ENCODE measurements at regions of chr22 and their contacts with region 1.

Region 1: GRCh38 chr22:40024201-40025061 is 29.7 kb downstream of the FAM83F start:
- DNase-seq: no peak
- H3K4me3 ChIP-seq: no peak overlapping the region
- H3K27me3 ChIP-seq: no peaks in the 10 kb centered on the region
- CTCF ChIP-seq: peak; percentile 96

Region 2: DNA sequence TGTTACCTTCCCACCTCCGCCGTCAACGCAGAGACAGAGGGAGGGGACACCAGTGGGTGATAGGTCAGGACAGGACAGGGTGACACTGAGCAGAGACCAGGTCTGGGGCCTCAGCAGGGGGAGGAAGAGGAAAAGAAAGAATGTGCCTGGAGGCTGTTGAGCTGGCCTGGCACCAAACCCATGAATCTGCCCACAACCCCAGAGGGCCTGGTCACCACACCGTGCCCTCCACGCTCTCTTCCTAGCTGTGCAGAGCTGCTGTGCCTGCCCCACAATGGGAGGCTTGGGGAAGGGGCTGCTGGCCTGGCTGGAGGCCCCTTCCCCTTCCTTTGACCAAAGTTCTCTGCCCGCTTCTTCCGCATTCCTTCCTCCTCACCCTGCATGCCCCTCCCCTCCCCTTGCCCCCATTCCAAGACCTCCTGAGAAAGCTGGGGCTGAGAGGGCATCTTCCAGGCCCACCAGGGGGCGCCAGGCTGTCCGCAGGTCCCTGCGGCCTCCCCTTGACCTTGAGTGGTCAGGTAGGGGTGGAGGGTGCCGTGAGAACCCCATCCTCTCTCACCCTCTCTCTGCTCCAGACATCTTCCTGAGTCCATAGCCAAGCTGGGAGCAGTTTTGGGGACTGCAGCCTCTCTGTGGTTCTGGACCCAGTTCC is 464.9 kb before region 1 on chr22:
- CTCF ChIA-PET with region 1: interaction called, 14 read pairs
- POLR2A ChIA-PET with region 1: no interaction called
- DNase-seq: no peak
- H3K4me3 ChIP-seq: no peak overlapping the region
- H3K27me3 ChIP-seq: peaks cover 40% of the 10 kb centered on the region
- CTCF ChIP-seq: peak; percentile 61

Region 3: DNA sequence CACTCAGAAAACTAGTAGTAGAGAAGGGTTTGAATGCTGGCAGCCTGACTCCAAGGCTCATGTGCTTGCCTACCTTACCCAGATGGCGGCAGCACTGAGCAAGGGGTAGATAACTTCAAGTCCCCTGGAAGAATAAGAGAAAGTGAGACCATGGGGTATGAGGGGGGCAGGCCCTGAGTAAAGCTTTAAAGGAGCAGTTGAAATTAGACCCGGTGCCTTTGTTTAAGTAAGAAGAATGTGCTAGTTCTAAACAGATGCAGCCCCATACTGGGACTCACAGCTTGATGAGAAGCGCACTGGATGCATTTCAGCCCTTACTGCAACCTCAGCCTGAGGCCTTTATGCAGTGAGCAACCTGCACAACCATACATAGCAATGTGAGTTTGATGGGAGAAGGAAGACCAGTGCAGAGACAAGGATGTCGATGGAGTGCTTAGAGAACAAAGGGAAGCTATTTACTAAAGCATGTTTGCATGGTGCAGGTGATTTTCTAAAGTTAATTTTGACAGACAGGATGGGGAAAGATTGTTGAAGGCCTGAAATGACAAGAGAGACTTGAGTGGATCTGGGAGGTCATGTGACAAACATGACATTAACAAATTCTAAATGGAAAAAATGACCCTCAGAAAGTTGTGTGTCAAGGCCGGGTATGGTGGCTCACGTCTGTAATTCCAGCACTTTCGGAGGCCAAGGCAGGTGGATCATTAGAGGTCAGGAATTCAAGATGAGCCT is 91.3 kb before region 1 on chr22:
- CTCF ChIA-PET with region 1: interaction called, 24 read pairs
- POLR2A ChIA-PET with region 1: no interaction called
- DNase-seq: no peak
- H3K4me3 ChIP-seq: no peak overlapping the region
- H3K27me3 ChIP-seq: peaks cover 24% of the 10 kb centered on the region
- CTCF ChIP-seq: peak; percentile 60

Region 4: GRCh38 chr22:40006641-40007040 is 17.8 kb before region 1 on chr22:
- CTCF ChIA-PET with region 1: interaction called, 11 read pairs
- POLR2A ChIA-PET with region 1: no interaction called
- DNase-seq: no peak
- H3K4me3 ChIP-seq: no peak overlapping the region
- H3K27me3 ChIP-seq: peaks cover 8% of the 10 kb centered on the region
- CTCF ChIP-seq: no peak

Region 5: GRCh38 chr22:40036591-40037225 is 12.3 kb after region 1 on chr22:
- CTCF ChIA-PET with region 1: interaction called, 34 read pairs
- POLR2A ChIA-PET with region 1: no interaction called
- DNase-seq: no peak
- H3K4me3 ChIP-seq: no peak overlapping the region
- H3K27me3 ChIP-seq: peaks cover 15% of the 10 kb centered on the region
- CTCF ChIP-seq: peak; percentile 84

Region 6: DNA sequence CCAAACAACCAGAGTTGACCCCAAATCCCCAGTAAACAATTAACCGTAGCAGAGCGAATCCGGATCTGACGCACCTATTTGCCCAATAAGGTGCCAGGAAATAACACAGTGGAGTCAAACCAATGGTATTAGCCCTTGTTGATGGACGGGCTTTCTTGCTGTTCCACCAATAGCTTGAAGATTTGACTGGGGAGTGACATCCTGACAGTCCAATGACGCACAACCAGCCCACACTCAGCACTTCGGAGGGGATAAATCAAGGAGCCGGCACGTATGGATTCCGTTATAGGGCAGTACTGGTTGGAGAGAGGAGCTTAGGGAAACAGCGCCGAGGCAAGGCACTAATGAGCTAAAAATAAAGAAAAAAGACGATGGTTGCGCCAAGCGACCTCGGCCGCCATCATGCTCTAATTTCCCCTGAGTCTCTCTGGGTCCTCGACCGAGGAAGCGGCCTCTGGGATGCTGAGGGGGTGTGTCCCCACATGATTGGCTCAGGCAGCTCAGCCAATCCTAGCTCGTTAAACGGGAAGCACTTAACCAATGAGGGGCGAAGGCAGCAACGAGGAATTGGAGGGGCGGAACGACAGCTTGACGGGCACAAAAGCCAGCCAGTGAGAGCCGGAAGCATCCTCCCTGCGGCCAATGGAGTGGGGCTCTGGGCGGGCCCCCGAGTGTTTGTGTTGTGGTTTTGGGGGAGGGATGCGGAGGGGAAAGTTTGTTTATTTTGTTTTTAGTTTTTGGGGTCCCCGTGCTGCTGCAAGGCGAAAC is 19.9 kb after region 1 on chr22:
- CTCF ChIA-PET with region 1: interaction called, 20 read pairs
- POLR2A ChIA-PET with region 1: interaction called, 3 read pairs
- DNase-seq: peak; percentile 96
- H3K4me3 ChIP-seq: peak overlapping the region; percentile 80
- H3K27me3 ChIP-seq: peaks cover 6% of the 10 kb centered on the region
- CTCF ChIP-seq: no peak

Region 7: GRCh38 chr22:40346178-40347118 is 322.0 kb after region 1 on chr22 and contains the start of gene ADSL:
- CTCF ChIA-PET with region 1: interaction called, 17 read pairs
- POLR2A ChIA-PET with region 1: no interaction called
- DNase-seq: no peak
- H3K4me3 ChIP-seq: peak within 1 kb of the TSS; percentile 85
- H3K27me3 ChIP-seq: no peaks in the 10 kb centered on the region
- CTCF ChIP-seq: 0 out of 2 replicates have a peak, but pooled peaks have one; percentile 29
- polyA plus RNA-seq, gene ADSL: 115 and 119 TPM in 2 replicates

Measured in BJ (cell line).